Activated CD8-positive, alpha-beta T cell treated with anti-CD3 and anti-CD28 coated beads, Interleukin-2, amount 10 ng/mL, durations not matched to agents 7 days and 5 days (primary cell): ENCODE measurements at regions of chr3 and their contacts with region 1.

Region 1: GRCh38 chr3:33041909-33042308 is 55.0 kb downstream of the GLB1 start:
- DNase-seq: no peak
- ATAC-seq: no peak
- H3K4me3 Mint-ChIP-seq: no peak overlapping the region
- H3K27ac Mint-ChIP-seq: no peak overlapping the region
- H3K4me1 Mint-ChIP-seq: peaks cover 48% of the 10 kb centered on the region
- H3K27me3 Mint-ChIP-seq: no peaks in the 10 kb centered on the region

Region 2: DNA sequence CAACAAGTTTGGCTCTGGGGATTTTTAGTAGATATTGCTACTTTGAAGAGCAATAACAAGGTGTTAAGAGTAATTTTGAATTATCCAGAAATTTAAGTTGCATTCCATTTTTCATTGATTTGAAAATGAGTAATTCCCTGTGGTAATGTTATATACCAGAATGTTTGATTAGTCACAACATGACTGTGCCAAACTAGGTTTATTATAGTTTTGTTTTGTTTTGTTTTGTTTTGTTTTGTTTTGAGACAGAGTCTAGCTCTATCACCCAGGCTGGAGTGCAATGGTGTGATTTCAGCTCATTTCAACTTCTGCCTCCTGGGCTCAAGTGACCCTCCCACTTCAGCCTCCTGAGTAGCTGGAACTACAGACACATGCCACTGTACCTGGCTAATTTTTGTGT is 316.2 kb before region 1 on chr3:
- CTCF ChIA-PET with region 1: no interaction called
- POLR2A ChIA-PET with region 1: no interaction called
- DNase-seq: no peak
- ATAC-seq: no peak
- H3K4me3 Mint-ChIP-seq: no peak overlapping the region
- H3K27ac Mint-ChIP-seq: no peak overlapping the region
- H3K4me1 Mint-ChIP-seq: no peaks in the 10 kb centered on the region
- H3K27me3 Mint-ChIP-seq: no peaks in the 10 kb centered on the region

Region 3: DNA sequence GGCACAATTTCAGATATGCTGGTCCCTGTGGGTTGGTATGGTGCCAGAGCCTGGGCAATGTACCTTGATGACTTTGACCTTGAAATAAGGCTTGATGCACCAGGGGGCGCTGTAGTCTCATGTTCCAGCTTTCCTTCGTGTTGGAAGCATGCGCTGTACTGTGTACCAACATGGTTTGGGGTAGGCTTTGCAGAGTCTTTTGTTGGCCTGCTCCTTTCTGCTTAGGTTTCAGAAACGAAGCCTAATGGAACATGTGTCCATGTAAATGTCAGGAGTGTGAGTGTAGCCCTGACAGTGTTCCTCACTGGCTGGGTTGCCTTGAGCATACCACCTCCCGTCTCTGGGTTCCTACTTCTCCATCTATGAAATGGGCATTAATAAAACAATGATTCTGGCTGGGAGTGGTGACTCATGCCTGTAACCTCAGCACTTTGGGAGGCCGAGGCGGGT is 94.1 kb before region 1 on chr3:
- CTCF ChIA-PET with region 1: interaction called, 17 read pairs
- POLR2A ChIA-PET with region 1: no interaction called
- DNase-seq: peak; percentile 94
- ATAC-seq: peak; percentile 90
- H3K4me3 Mint-ChIP-seq: no peak overlapping the region
- H3K27ac Mint-ChIP-seq: no peak overlapping the region
- H3K4me1 Mint-ChIP-seq: peaks cover 35% of the 10 kb centered on the region
- H3K27me3 Mint-ChIP-seq: peaks cover 3% of the 10 kb centered on the region

Region 4: DNA sequence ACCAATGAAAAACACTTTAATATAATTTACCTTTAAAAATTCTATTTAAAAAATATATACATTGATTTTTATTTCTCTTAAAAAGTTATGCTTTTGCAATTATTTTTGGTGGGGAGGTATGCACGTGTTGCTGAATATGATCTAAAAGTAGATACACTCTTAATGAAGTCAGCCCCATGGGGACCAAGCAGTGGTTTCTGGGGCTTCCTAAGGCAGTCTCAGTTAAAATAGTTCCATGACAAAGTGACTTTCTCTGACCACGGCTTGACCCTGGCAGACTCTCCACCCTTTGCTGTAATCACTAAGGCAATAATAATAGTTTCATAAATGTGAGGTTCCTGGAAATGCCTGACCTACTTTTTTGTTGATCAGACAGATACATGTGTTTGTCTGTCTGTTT is 40.0 kb before region 1 on chr3:
- CTCF ChIA-PET with region 1: no interaction called
- POLR2A ChIA-PET with region 1: no interaction called
- DNase-seq: no peak
- ATAC-seq: peak; percentile 30
- H3K4me3 Mint-ChIP-seq: no peak overlapping the region
- H3K27ac Mint-ChIP-seq: no peak overlapping the region
- H3K4me1 Mint-ChIP-seq: peaks cover 39% of the 10 kb centered on the region
- H3K27me3 Mint-ChIP-seq: no peaks in the 10 kb centered on the region

Region 5: DNA sequence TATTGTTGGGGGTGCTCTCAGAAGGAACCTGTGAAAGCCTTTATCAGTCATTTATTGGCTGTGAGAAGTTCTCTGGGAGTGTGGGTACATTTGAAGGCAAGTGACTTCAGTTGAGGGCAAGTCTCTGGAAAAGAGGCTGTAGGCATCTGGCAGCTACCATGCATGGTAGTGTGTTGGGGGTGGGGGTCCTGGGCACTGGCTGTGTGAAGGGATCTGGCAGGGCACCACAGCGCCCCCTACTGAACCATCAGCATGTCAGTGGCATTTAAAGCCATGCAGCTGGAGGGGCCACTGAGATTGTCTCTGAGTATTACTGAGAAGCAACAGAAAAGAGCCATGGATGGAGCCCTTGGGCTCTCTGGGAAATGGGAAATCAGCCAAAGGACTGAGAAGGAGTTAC is 102.5 kb after region 1 on chr3:
- CTCF ChIA-PET with region 1: no interaction called
- POLR2A ChIA-PET with region 1: no interaction called
- DNase-seq: peak; percentile 32
- ATAC-seq: no peak
- H3K4me3 Mint-ChIP-seq: no peak overlapping the region
- H3K27ac Mint-ChIP-seq: no peak overlapping the region
- H3K4me1 Mint-ChIP-seq: no peaks in the 10 kb centered on the region
- H3K27me3 Mint-ChIP-seq: peaks cover 2% of the 10 kb centered on the region